Activated B cell treated with CpG ODN at 0.5 μM for 24 hours (primary cell): ENCODE measurements at regions of chr2 and their contacts with region 1.

Region 1: GRCh38 chr2:176110975-176111663 is 4.0 kb downstream of the HOXD11 start:
- DNase-seq: no peak
- ATAC-seq: no peak
- H3K4me3 Mint-ChIP-seq: no peak overlapping the region
- H3K27ac Mint-ChIP-seq: no peak overlapping the region
- H3K4me1 Mint-ChIP-seq: peaks cover 11% of the 10 kb centered on the region
- H3K27me3 Mint-ChIP-seq: peaks cover 62% of the 10 kb centered on the region
- CTCF ChIP-seq: no peak

Region 2: DNA sequence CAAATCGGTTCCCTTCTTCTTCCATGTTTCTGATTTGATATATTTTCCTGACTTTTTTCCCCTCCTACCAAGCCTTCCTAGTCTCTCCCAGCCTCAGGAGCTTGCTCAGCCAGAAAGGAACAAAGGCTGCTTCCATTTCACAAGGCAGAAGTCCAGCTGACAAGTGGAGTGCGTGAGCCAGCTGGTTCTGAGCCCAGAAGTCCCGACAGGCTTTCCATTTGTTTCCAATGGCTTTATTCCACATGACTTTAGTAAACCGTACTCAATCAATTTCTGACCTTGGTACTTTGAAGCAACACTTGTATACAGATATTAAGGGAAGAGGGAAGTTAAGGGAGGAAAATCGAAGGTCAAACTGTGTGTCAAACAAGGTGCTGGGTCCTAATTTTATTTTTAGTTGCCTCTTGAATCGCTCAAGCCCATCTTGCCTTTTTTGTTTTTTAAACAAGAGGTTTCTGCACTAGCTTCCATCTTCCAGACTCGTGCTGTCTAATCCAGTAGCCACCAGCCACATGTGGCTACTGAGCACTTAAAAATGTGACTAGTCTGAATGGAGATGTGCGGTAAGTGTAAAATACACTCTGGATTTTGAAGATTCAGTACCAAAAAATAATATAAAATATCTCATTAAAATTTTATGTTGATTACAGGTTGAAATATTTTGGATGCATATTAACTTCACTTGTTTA is 1549.7 kb before region 1 on chr2:
- CTCF ChIA-PET with region 1: no interaction called
- POLR2A ChIA-PET with region 1: no interaction called
- intact Hi-C with region 1: no loop called
- DNase-seq: no peak
- ATAC-seq: no peak
- H3K4me3 Mint-ChIP-seq: no peak overlapping the region
- H3K27ac Mint-ChIP-seq: no peak overlapping the region
- H3K4me1 Mint-ChIP-seq: no peaks in the 10 kb centered on the region
- H3K27me3 Mint-ChIP-seq: no peaks in the 10 kb centered on the region
- CTCF ChIP-seq: no peak

Region 3: DNA sequence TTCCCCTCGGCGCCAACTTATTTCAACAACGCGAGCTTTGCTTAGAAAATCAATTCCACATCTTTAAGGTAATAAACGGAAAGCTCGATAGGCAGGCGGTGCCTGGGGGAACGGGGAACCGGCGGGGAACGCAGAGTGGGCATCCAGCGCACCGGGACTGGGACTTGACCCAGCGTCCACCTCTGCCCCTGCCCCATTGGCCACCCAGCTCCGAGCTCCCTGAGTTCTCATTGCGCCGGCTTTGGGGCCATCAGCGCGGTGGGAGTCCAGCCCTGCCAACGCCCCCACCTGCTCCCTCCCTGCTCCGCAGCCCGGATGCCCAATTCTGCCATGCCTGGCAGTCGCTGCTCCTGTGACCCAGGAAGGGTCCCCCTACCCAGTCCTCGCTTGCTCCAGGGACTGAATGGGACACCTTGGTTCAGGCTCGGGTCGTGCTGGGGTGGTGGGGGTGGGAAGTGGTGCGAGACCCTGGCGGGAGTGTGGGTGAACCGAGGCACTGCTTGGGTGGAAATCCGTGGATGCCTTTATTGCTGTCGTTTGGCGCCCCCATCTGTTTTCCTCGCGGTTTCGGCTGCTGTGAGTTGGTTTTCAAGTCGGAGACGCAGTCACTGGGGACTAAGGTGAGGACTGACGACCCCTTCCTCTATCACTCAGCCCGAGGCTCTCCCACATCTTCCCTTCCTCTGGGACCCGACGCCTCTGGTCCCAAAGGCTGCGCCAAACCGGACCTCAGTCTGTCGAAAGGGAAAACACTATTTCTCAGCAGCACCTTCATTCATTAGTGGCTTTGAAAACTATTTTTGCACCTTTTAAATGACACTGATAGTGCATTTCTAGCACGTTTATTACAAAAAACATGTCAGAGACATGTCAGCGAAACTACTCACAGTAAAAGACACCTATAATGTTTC is 25.0 kb before region 1 on chr2:
- CTCF ChIA-PET with region 1: no interaction called
- POLR2A ChIA-PET with region 1: no interaction called
- intact Hi-C with region 1: loop called (anchors 2 kb)
- DNase-seq: peak; percentile 15
- ATAC-seq: no peak
- H3K4me3 Mint-ChIP-seq: no peak overlapping the region
- H3K27ac Mint-ChIP-seq: no peak overlapping the region
- H3K4me1 Mint-ChIP-seq: peaks cover 5% of the 10 kb centered on the region
- H3K27me3 Mint-ChIP-seq: peaks cover 81% of the 10 kb centered on the region
- CTCF ChIP-seq: no peak

Region 4: DNA sequence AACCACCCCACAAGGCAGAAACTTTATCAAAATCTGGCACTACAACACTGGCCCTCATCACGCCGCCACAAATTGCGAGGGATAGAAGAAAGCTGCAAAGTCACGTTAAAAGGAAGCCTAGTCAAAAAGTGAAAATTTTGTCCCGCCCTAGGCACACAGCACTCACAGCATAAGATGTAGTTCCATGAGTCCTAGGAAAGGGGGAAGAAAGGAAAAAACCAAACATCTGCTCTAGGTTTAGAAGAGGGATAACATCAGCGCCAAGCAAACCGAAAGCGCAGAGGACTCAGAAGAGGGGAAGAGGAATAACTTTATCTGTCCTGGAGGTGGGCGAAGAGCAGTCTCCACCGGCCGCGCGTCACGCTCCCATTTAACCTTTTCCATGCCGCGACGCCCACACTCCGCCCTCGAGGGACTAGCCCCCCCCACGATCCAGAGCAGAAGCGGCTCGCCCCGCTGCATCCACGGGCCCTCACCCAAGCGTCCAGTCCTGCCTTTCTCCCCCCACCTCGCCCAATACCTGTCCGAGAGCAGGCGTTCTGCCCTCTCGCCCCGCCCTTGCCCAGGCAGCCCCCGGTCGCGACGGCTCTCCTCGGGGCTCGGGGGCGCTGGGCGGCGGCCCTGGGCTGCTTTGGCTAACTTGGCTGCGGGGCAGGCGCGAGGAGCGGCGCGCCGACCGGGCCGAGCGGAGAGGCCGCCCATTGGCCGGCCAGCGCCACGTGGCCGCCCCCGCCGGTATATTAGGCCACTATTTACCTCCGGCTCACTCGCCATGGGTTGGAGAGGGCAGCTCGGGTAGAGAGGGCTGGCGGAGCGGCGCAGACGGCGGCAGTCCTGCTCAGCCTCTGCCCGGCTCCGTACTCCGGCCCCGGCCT is 77.0 kb after region 1 on chr2 and contains the start of gene HOXD1:
- CTCF ChIA-PET with region 1: no interaction called
- POLR2A ChIA-PET with region 1: no interaction called
- intact Hi-C with region 1: no loop called
- DNase-seq: no peak
- ATAC-seq: no peak
- H3K4me3 Mint-ChIP-seq: peak within 1 kb of the TSS; percentile 83
- H3K27ac Mint-ChIP-seq: no peak within 1 kb of the TSS
- H3K4me1 Mint-ChIP-seq: peaks cover 19% of the 10 kb centered on the region
- H3K27me3 Mint-ChIP-seq: peaks cover 60% of the 10 kb centered on the region
- CTCF ChIP-seq: no peak
- total RNA-seq, gene HOXD1: not detected in 2 replicates